Posterior cingulate gyrus (tissue), 11 donors: ENCODE measurements at regions of chr15 and their contacts with region 1.

Region 1: GRCh38 chr15:89087830-89088604 is at the start of gene ABHD2:
- DNase-seq: peak; percentile 99 to 100 (median 100)

Region 2: GRCh38 chr15:89129123-89129815 is 41.3 kb after region 1 on chr15:
- intact Hi-C with region 1: loop called (anchors 5 kb)
- DNase-seq: peak in 7 of 10 donors; percentile 40 to 90 (median 63)